Activated T-helper 1 cell treated with anti-CD3 and anti-CD28 coated beads, Interleukin-12 subunit alpha, Interleukin-12 subunit beta, Interleukin-2, Interleukin-4 antibody, amounts not matched to agents 30 ng/mL and 10 ng/mL and 1 ng/mL, durations not matched to agents 14 hours and 24 hours and 36 hours (primary cell): ENCODE measurements at regions of chr15 and their contacts with region 1.

Region 1: DNA sequence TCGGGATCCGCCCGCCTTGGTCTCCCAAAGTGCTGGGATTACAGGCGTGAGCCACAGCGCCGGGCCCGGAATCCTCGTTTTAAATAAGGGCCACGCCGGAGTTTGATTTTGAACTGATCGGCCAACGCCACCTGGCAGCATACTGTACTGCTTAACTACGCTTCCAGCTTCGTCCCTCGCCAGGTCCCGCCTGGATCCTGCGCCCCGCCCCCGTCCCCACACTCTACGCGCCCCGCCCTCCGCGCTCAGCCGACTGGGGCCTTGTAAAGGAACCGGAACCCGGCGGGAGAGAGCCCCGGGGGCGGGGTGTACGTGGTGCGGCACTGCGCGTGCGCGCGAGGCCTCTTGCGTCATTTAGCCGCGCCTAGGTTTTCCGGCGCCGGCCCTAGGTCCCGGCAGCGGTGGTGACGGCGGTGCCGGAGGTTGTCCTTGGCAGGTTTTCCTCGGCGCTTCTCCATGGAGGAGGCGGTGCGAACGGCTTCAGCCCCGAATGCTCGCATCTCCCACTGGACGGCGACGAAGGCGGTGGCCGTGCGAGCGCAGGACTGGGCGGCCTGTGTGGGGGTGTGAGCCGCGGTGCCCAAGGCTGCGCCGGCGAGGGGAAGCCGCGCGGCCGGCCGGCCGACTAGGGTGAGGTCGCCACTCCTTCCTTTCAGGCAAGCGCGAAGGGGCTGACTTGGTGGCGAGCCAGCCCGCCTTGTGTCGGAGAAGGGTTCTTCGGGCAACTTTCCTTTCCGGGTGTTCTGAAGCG is at the start of gene NIPA2:
- DNase-seq: peak; percentile 99
- H3K4me3 Mint-ChIP-seq: peak within 1 kb of the TSS; percentile 97
- H3K27ac Mint-ChIP-seq: peak within 1 kb of the TSS; percentile 97
- H3K4me1 Mint-ChIP-seq: peaks cover 32% of the 10 kb centered on the region
- H3K27me3 Mint-ChIP-seq: peaks cover 5% of the 10 kb centered on the region
- total RNA-seq, gene NIPA2: 71.2 and 76.2 TPM in 2 replicates

Region 2: DNA sequence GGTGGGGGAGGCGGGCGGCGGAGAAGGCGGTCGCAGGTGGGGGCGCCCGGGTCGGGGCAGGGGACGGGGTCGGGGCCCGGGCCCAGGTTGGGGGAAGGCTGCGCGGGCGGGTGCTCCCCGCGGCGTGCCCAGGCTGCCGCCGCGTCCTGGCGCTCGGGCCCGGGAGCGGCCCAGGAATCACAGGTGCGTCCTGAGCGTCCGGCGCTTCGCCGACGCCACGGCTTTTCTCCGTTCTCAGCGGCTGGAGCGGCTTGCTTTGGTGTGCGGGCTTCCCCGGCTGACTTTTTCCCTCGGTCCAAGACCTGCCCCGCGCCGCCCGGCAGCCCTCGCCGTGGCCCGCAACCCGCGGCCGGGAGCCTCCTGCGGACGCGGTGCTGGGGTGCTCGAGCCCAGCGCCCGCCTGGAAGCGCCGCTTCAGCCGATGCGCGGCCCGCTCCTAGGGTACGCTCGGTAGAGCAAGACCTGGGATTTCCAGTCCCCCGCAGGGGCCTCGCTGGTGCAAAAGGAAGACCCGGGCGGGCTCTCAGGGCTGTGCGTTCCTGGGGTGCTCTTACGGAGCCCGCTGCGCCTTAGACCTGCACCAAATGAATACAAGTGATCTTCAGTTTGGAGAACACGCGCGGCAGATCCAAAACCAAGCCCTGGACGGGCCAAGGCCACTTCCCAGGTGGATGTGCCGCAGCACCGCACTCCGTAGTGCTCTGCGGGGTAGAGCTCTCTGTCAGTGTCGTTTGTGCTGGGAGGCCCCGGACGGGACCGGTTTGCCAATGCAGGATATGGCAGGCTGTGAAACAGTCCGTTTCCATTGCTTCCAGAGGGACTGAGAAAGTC is 51.4 kb before region 1 on chr15:
- intact Hi-C with region 1: loop called (anchors 2 kb)
- DNase-seq: no peak
- H3K4me3 Mint-ChIP-seq: peak overlapping the region; percentile 86
- H3K27ac Mint-ChIP-seq: peak overlapping the region; percentile 63
- H3K4me1 Mint-ChIP-seq: peaks cover 25% of the 10 kb centered on the region
- H3K27me3 Mint-ChIP-seq: peaks cover 13% of the 10 kb centered on the region

Region 3: GRCh38 chr15:22795206-22796063 is 43.0 kb before region 1 on chr15:
- intact Hi-C with region 1: loop called (anchors 2 kb)
- DNase-seq: no peak
- H3K4me3 Mint-ChIP-seq: no peak overlapping the region
- H3K27ac Mint-ChIP-seq: peak overlapping the region; percentile 52
- H3K4me1 Mint-ChIP-seq: peaks cover 34% of the 10 kb centered on the region
- H3K27me3 Mint-ChIP-seq: no peaks in the 10 kb centered on the region

Region 4: GRCh38 chr15:22868495-22868894 is 30.0 kb after region 1 on chr15:
- intact Hi-C with region 1: loop called (anchors 2 kb)
- DNase-seq: no peak
- H3K4me3 Mint-ChIP-seq: no peak overlapping the region
- H3K27ac Mint-ChIP-seq: no peak overlapping the region
- H3K4me1 Mint-ChIP-seq: no peaks in the 10 kb centered on the region
- H3K27me3 Mint-ChIP-seq: no peaks in the 10 kb centered on the region

Region 5: DNA sequence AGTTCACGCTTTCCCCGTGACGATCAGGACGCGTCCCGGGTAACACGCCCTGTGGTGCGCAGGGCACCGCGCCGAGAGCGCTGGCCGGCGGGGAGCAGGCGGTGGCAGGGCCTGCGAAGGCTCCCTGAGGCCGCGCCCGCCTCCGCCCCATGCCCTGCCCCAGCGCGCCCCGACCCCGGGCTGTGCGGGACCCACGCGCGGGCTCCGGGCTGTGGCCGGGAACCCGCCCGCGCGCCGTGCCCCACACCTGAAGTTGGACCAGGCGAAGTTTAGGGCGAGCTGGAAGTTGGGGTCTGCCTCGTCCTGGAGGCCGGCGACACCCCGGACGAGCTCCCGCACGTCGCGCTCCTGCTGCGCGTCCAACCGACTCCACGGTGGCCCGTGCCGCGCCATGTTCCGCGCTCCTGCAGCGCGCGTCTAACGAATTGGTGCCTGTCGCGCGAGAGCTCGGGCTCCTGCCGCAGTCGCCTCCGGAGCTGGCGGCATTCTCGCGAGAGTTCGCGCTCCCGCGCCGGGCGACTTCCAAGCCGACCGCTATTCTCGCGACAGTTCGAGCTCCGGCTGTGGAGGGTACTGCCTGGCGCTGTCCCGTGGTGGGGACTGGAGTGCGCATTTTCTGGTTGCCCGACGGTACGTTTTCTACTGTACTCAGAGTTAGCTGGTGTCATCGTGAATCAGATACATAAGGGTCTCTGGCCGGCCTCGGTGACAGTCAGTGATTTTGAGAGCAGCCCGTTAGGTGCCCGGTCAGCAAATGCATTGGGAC is 200.9 kb after region 1 on chr15 and contains the start of gene TUBGCP5:
- intact Hi-C with region 1: loop called (anchors 5 kb)
- DNase-seq: peak; percentile 98
- H3K4me3 Mint-ChIP-seq: peak within 1 kb of the TSS; percentile 93
- H3K27ac Mint-ChIP-seq: peak within 1 kb of the TSS; percentile 98
- H3K4me1 Mint-ChIP-seq: peaks cover 17% of the 10 kb centered on the region
- H3K27me3 Mint-ChIP-seq: no peaks in the 10 kb centered on the region
- total RNA-seq, gene TUBGCP5: 22.3 and 25.9 TPM in 2 replicates